Activated CD4-positive, alpha-beta memory T cell treated with anti-CD3 and anti-CD28 coated beads for 36 hours (primary cell): ENCODE measurements at regions of chr1 and their contacts with region 1.

Region 1: GRCh38 chr1:212981571-212982328 is 31.4 kb downstream of the VASH2 start:
- DNase-seq: no peak
- H3K4me3 Mint-ChIP-seq: no peak overlapping the region
- H3K27ac Mint-ChIP-seq: no peak overlapping the region
- H3K4me1 Mint-ChIP-seq: peaks cover 36% of the 10 kb centered on the region
- H3K27me3 Mint-ChIP-seq: no peaks in the 10 kb centered on the region

Region 2: DNA sequence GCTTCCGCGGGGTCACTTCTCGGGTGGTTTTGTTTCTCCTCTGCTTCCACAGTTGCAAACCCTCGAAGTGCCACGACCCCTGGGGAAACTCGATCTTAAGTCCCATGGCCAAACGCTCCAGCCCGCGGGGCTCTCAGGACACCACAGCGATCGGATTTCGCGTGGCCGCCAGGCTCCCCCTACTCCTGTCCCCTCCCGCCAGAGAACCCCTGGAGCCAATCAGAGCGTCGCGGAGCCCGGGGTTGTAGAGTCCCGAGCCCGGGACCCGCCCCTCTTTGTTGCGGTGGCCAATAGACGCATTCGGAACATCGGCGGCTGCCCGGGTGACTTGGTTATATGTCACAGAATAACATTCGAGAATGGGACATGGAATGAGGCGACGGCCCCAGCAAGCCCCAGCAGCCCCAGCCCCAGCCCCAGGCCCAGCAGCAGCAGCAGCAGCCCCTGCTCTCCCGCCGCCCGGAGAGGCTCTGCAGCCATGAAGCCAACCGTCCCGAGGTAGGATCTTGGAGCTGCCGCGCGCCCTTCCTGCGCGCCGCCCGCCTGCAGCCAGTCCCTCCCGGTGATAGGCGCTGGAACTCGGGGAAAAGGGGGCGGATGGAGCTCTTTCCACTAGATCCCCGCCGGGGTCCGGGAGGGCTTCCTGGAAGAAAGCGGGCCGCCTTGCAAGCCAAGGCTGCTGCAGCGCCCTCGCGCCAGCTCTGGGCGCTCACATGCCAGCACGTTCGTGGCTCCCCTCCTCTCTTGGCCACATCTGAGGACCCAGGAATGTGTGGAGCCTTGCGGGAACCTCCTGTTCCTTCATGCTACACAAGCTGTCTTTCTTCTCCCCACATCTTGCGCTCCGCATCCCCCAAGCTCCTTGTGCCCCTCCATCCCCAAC is 31.3 kb before region 1 on chr1 and contains the start of gene VASH2:
- CTCF ChIA-PET with region 1: no interaction called
- POLR2A ChIA-PET with region 1: no interaction called
- intact Hi-C with region 1: loop called (anchors 2 kb)
- DNase-seq: peak; percentile 82
- H3K4me3 Mint-ChIP-seq: peak within 1 kb of the TSS; percentile 72
- H3K27ac Mint-ChIP-seq: no peak within 1 kb of the TSS
- H3K4me1 Mint-ChIP-seq: peaks cover 7% of the 10 kb centered on the region
- H3K27me3 Mint-ChIP-seq: peaks cover 39% of the 10 kb centered on the region
- total RNA-seq, gene VASH2: 0.57 to 0.63 TPM

Region 3: GRCh38 chr1:212967801-212968200 is 13.9 kb before region 1 on chr1:
- CTCF ChIA-PET with region 1: interaction called, 10 read pairs
- POLR2A ChIA-PET with region 1: no interaction called
- intact Hi-C with region 1: no loop called
- DNase-seq: no peak
- H3K4me3 Mint-ChIP-seq: no peak overlapping the region
- H3K27ac Mint-ChIP-seq: no peak overlapping the region
- H3K4me1 Mint-ChIP-seq: peaks cover 4% of the 10 kb centered on the region
- H3K27me3 Mint-ChIP-seq: peaks cover 17% of the 10 kb centered on the region

Region 4: DNA sequence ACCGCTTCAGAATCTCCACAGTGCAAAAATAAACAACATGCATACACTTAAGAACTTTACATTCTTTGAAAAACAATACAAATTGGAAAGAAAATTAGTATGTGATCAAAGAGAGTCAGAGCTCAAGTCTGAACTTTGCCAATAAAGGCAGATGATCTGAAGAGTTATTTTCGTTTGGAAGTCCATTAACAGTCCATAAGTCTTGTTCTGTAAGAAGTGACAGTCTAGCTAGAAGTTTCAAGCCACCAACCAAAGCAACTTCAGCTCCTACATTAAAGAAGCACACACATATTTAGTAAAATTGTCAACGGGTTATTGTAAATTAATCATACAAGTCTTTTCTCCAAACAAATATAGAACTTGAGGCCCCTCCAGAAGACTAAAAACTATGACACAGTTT is 13.2 kb after region 1 on chr1:
- CTCF ChIA-PET with region 1: interaction called, 15 read pairs
- POLR2A ChIA-PET with region 1: no interaction called
- intact Hi-C with region 1: no loop called
- DNase-seq: no peak
- H3K4me3 Mint-ChIP-seq: no peak overlapping the region
- H3K27ac Mint-ChIP-seq: no peak overlapping the region
- H3K4me1 Mint-ChIP-seq: peaks cover 10% of the 10 kb centered on the region
- H3K27me3 Mint-ChIP-seq: no peaks in the 10 kb centered on the region

Region 5: GRCh38 chr1:213003256-213003655 is 21.5 kb after region 1 on chr1:
- CTCF ChIA-PET with region 1: interaction called, 4 read pairs
- POLR2A ChIA-PET with region 1: no interaction called
- intact Hi-C with region 1: loop called (anchors 2 kb)
- DNase-seq: peak; percentile 48
- H3K4me3 Mint-ChIP-seq: no peak overlapping the region
- H3K27ac Mint-ChIP-seq: peak overlapping the region; percentile 57
- H3K4me1 Mint-ChIP-seq: peaks cover 13% of the 10 kb centered on the region
- H3K27me3 Mint-ChIP-seq: no peaks in the 10 kb centered on the region

Region 6: GRCh38 chr1:213315571-213315970 is 333.8 kb after region 1 on chr1:
- CTCF ChIA-PET with region 1: no interaction called
- POLR2A ChIA-PET with region 1: no interaction called
- intact Hi-C with region 1: no loop called
- DNase-seq: no peak
- H3K4me3 Mint-ChIP-seq: no peak overlapping the region
- H3K27ac Mint-ChIP-seq: no peak overlapping the region
- H3K4me1 Mint-ChIP-seq: no peaks in the 10 kb centered on the region
- H3K27me3 Mint-ChIP-seq: no peaks in the 10 kb centered on the region